Activated naive CD4-positive, alpha-beta T cell treated with anti-CD3 and anti-CD28 coated beads for 36 hours (primary cell): ENCODE measurements at regions of chr9 and their contacts with region 1.

Region 1: GRCh38 chr9:124574534-124575341 is 67.5 kb upstream of the NR5A1 start:
- DNase-seq: no peak
- H3K4me3 Mint-ChIP-seq: no peak overlapping the region
- H3K27ac Mint-ChIP-seq: no peak overlapping the region
- H3K4me1 Mint-ChIP-seq: peaks cover 2% of the 10 kb centered on the region
- H3K27me3 Mint-ChIP-seq: peaks cover 8% of the 10 kb centered on the region

Region 2: GRCh38 chr9:124410321-124410913 is 164.3 kb before region 1 on chr9:
- CTCF ChIA-PET with region 1: no interaction called
- intact Hi-C with region 1: no loop called
- DNase-seq: no peak
- H3K4me3 Mint-ChIP-seq: no peak overlapping the region
- H3K27ac Mint-ChIP-seq: no peak overlapping the region
- H3K4me1 Mint-ChIP-seq: peaks cover 44% of the 10 kb centered on the region
- H3K27me3 Mint-ChIP-seq: no peaks in the 10 kb centered on the region

Region 3: DNA sequence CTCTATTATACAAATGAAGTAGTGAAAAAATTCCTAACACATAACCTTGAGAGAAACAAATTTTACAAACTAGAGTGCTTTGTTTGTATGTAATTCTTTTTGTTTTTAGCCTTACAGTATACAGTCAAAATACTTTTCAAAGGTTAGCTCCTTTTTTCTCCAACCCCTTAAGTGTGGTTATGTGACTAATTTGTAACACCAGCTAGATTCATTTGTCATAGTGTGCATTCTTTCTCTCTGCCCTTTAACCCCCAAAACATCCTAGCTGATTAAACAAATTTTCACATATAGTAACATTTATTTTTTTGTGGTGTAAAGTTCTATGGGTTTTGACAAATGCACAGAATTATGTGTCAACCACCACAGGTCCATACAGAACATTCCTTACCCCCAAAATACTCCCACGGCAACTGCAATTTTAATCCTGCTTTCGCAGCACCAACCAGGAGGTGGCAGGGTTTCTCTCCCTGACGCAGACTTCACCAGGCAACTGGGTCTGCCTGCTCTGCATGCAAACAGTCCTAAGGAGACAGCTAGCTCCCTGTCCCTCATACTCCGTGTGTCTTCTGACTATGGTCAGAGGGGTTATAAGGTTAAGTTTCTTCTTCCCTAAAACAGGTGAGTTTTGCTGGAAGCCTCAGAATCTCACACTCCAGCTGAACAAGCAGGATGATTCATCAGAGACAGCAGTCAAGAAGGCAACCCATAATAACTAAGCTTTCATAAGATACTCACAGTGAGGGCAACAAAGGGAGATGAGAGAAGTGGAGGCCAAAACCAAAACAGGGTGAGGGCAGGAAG is 23.1 kb before region 1 on chr9:
- CTCF ChIA-PET with region 1: interaction called, 8 read pairs
- intact Hi-C with region 1: loop called (anchors 2 kb)
- DNase-seq: peak; percentile 62
- H3K4me3 Mint-ChIP-seq: no peak overlapping the region
- H3K27ac Mint-ChIP-seq: no peak overlapping the region
- H3K4me1 Mint-ChIP-seq: peaks cover 18% of the 10 kb centered on the region
- H3K27me3 Mint-ChIP-seq: no peaks in the 10 kb centered on the region

Region 4: DNA sequence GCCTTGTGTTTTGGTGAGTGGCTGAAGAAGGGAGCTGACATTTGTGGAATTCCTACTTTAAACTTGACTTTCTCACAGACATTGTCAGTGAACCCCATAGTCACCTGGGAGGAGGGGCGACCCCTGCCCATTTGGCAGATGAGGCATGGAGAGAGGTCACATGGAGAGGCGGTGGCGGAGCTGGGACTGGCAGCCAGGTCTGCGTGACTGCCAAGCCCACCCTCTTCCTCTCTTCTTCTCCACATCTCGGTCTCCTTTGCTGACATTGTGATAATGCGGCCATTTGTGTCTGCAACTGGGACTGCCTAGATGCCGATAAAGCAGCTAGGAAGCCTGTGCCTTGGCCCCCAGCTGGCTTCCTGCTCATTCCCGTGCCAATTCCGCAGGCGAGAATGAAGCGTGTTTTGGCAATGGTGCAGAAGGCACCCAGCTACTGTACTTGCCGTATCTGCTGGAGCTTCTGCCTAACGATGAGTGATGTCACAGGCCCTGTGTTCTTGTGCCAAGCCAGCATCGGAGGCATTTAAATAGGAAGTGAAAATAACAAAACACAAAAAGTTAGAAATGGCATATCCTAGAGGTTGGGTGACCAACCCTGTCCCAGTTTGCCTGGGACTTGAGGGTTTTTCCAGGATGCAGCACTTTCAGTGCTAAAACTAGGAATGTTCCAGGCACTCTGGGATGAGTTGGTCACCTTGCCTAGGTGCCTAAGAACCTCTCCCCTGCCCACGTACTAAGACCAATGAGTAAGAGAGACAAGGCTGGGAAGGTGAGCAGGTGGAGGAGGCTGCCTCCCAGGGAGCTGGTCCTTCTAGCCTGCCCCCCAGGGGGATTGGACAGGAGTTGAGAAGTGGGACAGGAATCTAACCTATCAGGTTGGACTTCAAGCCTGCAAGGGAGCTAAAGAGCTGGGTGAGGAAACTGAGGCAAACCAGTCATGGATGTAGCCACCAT is 225.8 kb after region 1 on chr9:
- CTCF ChIA-PET with region 1: no interaction called
- intact Hi-C with region 1: no loop called
- DNase-seq: no peak
- H3K4me3 Mint-ChIP-seq: no peak overlapping the region
- H3K27ac Mint-ChIP-seq: no peak overlapping the region
- H3K4me1 Mint-ChIP-seq: no peaks in the 10 kb centered on the region
- H3K27me3 Mint-ChIP-seq: peaks cover 4% of the 10 kb centered on the region